ENCODE measurements at regions of chr5 and their contacts with region 1.

Region 1: GRCh38 chr5:5419294-5420210 is 2.9 kb upstream of the ICE1 start:
- DNase-seq: peak in 1 of 3 donors; percentile 11
- ATAC-seq: no peak
- H3K4me3 ChIP-seq: no peak overlapping the region
- H3K4me1 ChIP-seq: peaks cover 19% of the 10 kb centered on the region
- CTCF ChIP-seq: no peak

Region 2: GRCh38 chr5:4868109-4868735 is 551.3 kb before region 1 on chr5:
- intact Hi-C with region 1: loop called in 1 of 2 experiments (anchors 10 kb)
- DNase-seq: peak in 2 of 3 donors; percentile 36 to 68
- ATAC-seq: peak; percentile 47
- H3K4me3 ChIP-seq: no peak overlapping the region
- H3K4me1 ChIP-seq: no peaks in the 10 kb centered on the region
- CTCF ChIP-seq: peak; percentile 54

Region 3: DNA sequence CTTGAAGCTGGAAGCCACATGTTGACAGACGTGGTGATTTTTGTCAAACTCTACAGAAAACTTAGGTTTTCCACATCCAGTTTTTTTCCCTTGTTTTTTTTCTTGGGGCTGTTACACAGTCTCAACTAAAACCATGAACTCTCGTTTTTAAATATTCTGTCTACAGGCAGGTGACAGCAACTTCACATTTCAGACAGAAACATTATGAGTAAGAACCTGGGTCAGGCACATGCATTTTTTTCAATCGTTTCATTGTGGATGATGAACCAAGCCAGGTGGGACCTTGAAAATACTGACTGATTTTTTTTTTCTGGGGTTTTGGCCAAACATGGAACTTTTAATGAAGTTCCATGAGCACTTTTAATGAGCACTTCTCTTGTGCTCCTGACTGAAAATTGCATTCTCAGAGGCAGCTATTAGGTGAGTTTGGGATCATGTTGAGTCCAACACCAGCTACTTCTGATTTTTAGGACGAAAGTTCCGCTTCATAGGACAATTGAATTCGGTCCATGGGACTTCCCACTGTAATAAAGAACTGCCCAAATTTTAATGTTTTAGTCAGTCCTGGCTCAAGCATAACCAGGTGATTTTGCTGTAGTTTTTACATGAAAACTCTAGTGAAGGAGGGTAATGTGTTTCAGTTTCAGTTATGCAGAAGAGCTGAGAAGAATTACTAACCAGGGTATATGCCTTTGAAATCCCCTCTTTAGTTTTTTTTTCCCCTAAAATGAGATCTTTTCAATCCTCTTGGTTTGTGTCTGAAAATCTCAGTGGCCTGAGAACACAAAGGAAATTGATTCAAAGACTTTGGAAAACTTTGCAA is 372.7 kb before region 1 on chr5:
- intact Hi-C with region 1: no loop called
- DNase-seq: no peak
- ATAC-seq: no peak
- H3K4me3 ChIP-seq: no peak overlapping the region
- H3K4me1 ChIP-seq: no peaks in the 10 kb centered on the region
- CTCF ChIP-seq: no peak

Region 4: GRCh38 chr5:5141625-5142532 is 277.7 kb before region 1 on chr5:
- intact Hi-C with region 1: loop called (anchors 5 kb)
- DNase-seq: peak in 1 of 3 donors; percentile 67
- ATAC-seq: peak; percentile 36
- H3K4me3 ChIP-seq: no peak overlapping the region
- H3K4me1 ChIP-seq: no peaks in the 10 kb centered on the region
- CTCF ChIP-seq: peak; percentile 59

Region 5: GRCh38 chr5:5544094-5544663 is 124.6 kb after region 1 on chr5:
- intact Hi-C with region 1: no loop called
- DNase-seq: no peak
- ATAC-seq: no peak
- H3K4me3 ChIP-seq: no peak overlapping the region
- H3K4me1 ChIP-seq: no peaks in the 10 kb centered on the region
- CTCF ChIP-seq: no peak

Measured in mucosa of descending colon (tissue), 3 donors.